ENCODE measurements at regions of chr3 and their contacts with region 1.

Region 1: DNA sequence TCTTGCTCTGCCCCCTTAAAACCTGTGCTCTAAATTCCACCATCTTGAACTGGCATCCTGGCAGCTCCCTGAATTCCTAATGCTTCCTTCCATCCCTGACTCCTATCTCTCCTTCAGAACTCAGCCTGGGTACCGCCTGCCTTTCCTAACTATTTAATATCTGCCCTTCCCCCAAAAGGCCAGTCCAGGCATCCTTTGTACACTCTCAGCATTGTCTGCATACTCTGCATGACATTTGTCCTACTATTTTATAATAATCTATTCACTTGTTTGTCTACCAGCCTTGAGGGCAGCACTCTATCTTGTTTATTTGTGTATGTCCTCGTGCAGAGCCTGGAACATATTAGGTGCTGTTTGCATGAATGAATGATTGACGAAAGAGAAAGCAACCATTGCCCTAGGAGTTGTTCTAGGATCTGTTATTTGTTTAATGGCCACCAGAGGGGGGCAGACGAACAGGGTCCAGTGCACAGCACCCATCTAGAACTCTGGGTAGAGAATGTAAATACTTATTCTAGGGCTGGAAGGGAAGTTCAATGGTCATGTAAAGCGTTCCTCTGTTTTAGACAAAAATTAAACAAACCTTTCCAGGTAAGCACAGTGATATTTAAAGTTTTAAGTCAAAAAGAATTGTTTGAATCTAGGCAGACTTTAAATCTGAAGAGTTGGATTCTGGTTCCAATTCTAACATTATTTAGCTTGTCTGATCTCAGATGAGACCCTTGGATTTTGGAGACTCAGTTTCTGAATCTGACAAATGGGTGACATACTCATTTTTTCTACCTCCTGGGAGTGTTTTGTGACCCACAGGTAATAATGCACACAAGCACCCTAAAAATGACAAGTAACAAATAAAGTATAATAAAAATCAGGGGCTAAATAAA is 125.8 kb upstream of the GALNT15 start:
- DNase-seq: peak in 40 of 42 donors; percentile 17 to 89 (median 64)

Region 2: GRCh38 chr3:16177962-16178627 is 129.4 kb after region 1 on chr3:
- intact Hi-C with region 1: loop called (anchors 2 kb)
- DNase-seq: peak; percentile 73 to 96 (median 90)

Region 3: DNA sequence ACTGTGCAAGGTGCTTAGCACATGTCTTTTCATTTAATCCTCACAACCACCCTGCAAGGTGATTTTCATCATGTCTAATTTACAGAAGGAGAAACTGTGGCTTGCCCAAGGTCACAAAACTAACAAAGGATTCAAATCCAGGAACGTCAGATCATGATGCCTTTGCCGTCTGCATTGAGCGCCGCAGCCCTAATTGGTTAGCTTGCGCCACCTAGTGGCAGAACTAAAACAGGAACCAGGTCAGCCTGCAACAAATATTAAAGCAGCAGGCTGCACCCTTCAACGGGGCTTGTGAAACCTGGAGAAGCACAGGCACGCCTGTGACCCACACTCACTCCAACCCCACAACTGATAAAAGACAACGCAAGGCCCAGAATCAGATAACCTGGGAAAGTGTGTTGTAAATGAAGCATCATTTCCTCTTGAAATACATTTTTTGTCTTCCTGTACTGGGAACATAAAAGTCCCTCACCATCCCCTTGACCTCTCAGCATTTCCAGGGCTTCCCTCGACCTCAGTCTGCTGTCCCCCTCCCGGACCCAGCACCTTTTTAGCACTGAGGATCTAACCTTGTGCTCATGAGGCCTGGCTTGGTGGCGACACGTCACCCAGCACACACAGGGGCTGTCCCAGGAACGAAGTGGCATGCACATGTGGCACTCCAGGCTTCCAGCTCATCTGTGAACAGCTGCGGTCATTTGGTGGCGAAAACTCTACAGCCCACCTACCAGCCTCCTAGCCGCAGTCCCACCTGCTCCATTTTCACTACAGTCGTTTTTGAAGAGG is 198.8 kb after region 1 on chr3:
- intact Hi-C with region 1: loop called (anchors 5 kb)
- DNase-seq: peak; percentile 65 to 94 (median 86)